ENCODE measurements at regions of chr1 and their contacts with region 1.

Region 1: GRCh38 chr1:244325056-244325764 is 126.5 kb downstream of the ADSS2 start:
- DNase-seq: peak; percentile 55
- ATAC-seq: peak; percentile 86
- H3K4me3 Mint-ChIP-seq: peak overlapping the region; percentile 44
- H3K27ac Mint-ChIP-seq: peak overlapping the region; percentile 82
- H3K4me1 Mint-ChIP-seq: peaks cover 52% of the 10 kb centered on the region
- H3K27me3 Mint-ChIP-seq: peaks cover 4% of the 10 kb centered on the region

Region 2: GRCh38 chr1:244336232-244336899 is 11.2 kb after region 1 on chr1:
- CTCF ChIA-PET with region 1: interaction called, 10 read pairs
- POLR2A ChIA-PET with region 1: interaction called, 4 read pairs
- DNase-seq: no peak
- ATAC-seq: no peak
- H3K4me3 Mint-ChIP-seq: no peak overlapping the region
- H3K27ac Mint-ChIP-seq: no peak overlapping the region
- H3K4me1 Mint-ChIP-seq: peaks cover 34% of the 10 kb centered on the region
- H3K27me3 Mint-ChIP-seq: peaks cover 23% of the 10 kb centered on the region

Region 3: GRCh38 chr1:244451951-244452795 is 127.0 kb after region 1 on chr1:
- CTCF ChIA-PET with region 1: interaction called, 4 read pairs
- POLR2A ChIA-PET with region 1: interaction called, 13 read pairs
- DNase-seq: peak; percentile 99
- ATAC-seq: peak; percentile 96
- H3K4me3 Mint-ChIP-seq: peak overlapping the region; percentile 90
- H3K27ac Mint-ChIP-seq: peak overlapping the region; percentile 95
- H3K4me1 Mint-ChIP-seq: peaks cover 36% of the 10 kb centered on the region
- H3K27me3 Mint-ChIP-seq: no peaks in the 10 kb centered on the region

Measured in activated CD8-positive, alpha-beta T cell treated with anti-CD3 and anti-CD28 coated beads, Interleukin-2, amount 10 ng/mL, durations not matched to agents 7 days and 5 days (primary cell).